ENCODE measurements at regions of chr1 and their contacts with region 1.

Region 1: GRCh38 chr1:40338745-40339424 is 21.8 kb upstream of the COL9A2 start:
- DNase-seq: peak; percentile 85 to 92 (median 92)
- ATAC-seq: peak; percentile 95
- H3K4me3 ChIP-seq: no peak overlapping the region
- H3K4me1 ChIP-seq: no peaks in the 10 kb centered on the region
- CTCF ChIP-seq: peak; percentile 97

Region 2: GRCh38 chr1:40143891-40144575 is 194.9 kb before region 1 on chr1:
- intact Hi-C with region 1: loop called in 1 of 2 experiments (anchors 10 kb)
- DNase-seq: peak in 2 of 3 donors; percentile 31 to 86
- ATAC-seq: peak; percentile 78
- H3K4me3 ChIP-seq: no peak overlapping the region
- H3K4me1 ChIP-seq: no peaks in the 10 kb centered on the region
- CTCF ChIP-seq: no peak

Region 3: GRCh38 chr1:40153073-40153770 is 185.7 kb before region 1 on chr1:
- intact Hi-C with region 1: loop called (anchors 2 to 10 kb)
- DNase-seq: peak in 1 of 3 donors; percentile 61
- ATAC-seq: peak; percentile 59
- H3K4me3 ChIP-seq: no peak overlapping the region
- H3K4me1 ChIP-seq: no peaks in the 10 kb centered on the region
- CTCF ChIP-seq: peak; percentile 47